ENCODE measurements at regions of chr2 and their contacts with region 1.

Region 1: GRCh38 chr2:196987649-196988364 is 61.3 kb upstream of the PGAP1 start:
- DNase-seq: no peak
- ATAC-seq: peak; percentile 81 to 99

Region 2: GRCh38 chr2:196926562-196927375 is 61.0 kb before region 1 on chr2 and contains the start of gene PGAP1:
- intact Hi-C with region 1: loop called in 1 of 2 experiments (anchors 2 kb)
- DNase-seq: peak; percentile 93
- ATAC-seq: peak; percentile 98 to 99
- total RNA-seq, gene PGAP1: 7.9 to 9.0 TPM